B cell (primary cell): ENCODE measurements at regions of chr11 and their contacts with region 1.

Region 1: GRCh38 chr11:14519917-14520746 is at the start of gene PSMA1:
- DNase-seq: peak; percentile 94
- ATAC-seq: peak; percentile 93
- H3K4me3 ChIP-seq: peak within 1 kb of the TSS; percentile 69 to 93 (median 89)
- H3K4me3 Mint-ChIP-seq: peak within 1 kb of the TSS; percentile 98
- H3K27ac ChIP-seq: peak within 1 kb of the TSS; percentile 83 to 91
- H3K27ac Mint-ChIP-seq: peak within 1 kb of the TSS; percentile 97
- H3K4me1 ChIP-seq: peaks cover 13 to 18% of the 10 kb centered on the region in 2 donors
- H3K4me1 Mint-ChIP-seq: peaks cover 21% of the 10 kb centered on the region
- H3K27me3 ChIP-seq: no peaks in the 10 kb centered on the region
- H3K27me3 Mint-ChIP-seq: no peaks in the 10 kb centered on the region
- CTCF ChIP-seq: no peak
- total RNA-seq, gene PSMA1: 115 and 123 TPM in 2 replicates

Region 2: DNA sequence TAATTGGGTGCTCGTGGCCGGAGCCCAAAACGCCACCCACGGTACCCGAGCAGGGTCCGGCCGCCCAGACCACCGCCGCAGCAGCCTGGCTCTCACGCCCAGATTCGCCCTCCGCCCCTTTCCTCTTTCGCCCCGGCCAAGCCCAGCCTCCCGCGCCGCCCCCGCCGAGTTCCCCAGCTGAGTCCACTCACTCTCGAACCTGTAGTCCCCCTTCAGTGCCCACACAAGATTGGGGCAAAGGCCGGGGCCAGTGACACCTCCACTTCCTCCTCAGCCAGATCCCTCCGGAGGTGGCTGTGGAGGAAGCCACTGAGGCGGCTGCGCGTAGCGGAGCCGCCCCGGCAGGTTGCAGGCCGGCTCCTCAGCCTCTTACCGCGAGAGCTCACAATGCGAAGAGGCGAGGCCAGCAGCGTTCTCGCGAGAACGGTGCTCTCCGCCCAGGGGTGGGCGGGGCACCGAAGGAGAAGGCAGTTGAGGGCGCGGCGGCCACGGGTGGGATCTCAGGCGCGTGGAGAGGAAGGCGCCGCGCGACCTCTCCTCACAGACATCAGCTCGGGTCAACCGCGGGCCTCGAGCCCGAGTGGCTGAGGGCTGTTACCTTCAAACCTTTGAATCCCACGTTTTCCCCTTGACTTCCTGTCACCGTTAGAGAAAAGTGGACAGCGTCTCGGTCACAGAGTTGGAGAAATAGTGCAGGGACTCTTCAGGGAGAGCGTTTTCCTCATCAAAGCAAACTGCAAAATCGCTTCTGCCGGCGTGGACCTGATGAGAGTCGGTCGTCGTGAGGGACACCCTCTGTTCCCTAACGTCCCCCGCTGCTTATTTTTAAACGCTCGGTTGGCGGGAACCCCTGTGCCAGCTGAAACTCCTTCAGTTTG is 1057.0 kb before region 1 on chr11 and contains the start of gene BTBD10:
- CTCF ChIA-PET with region 1: no interaction called
- POLR2A ChIA-PET with region 1: no interaction called
- intact Hi-C with region 1: loop called (anchors 10 kb)
- DNase-seq: peak; percentile 97
- ATAC-seq: peak; percentile 98
- H3K4me3 ChIP-seq: peak within 1 kb of the TSS; percentile 87 to 94 (median 88)
- H3K4me3 Mint-ChIP-seq: peak within 1 kb of the TSS; percentile 99
- H3K27ac ChIP-seq: peak within 1 kb of the TSS; percentile 83 to 93
- H3K27ac Mint-ChIP-seq: peak within 1 kb of the TSS; percentile 97
- H3K4me1 ChIP-seq: peaks cover 17 to 18% of the 10 kb centered on the region in 2 donors
- H3K4me1 Mint-ChIP-seq: peaks cover 46% of the 10 kb centered on the region
- H3K27me3 ChIP-seq: no peaks in the 10 kb centered on the region
- H3K27me3 Mint-ChIP-seq: no peaks in the 10 kb centered on the region
- CTCF ChIP-seq: no peak
- total RNA-seq, gene BTBD10: 19.6 and 22.8 TPM in 2 replicates

Region 3: DNA sequence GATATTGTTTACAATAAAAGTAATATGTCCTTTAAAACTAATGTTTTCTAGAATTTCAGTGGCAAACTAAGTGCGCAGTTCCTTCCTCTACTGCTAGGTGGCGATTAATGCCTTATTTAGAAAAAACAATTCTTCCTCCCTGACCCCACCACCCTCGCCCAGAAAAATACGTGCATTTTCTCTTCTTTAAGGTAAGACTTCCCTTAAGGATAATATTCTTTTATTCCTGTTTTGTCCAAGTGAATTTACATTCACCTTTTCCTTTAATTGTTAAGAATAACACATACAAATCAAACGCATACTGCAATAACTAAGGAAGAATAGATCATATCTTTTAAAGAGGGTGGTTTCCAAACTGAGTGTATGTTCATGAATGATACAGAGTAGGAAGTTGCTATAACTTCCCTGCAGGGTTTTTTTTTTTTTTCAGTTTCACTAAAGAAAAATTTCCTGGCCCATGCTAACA is 17.0 kb after region 1 on chr11:
- CTCF ChIA-PET with region 1: interaction called, 4 read pairs
- POLR2A ChIA-PET with region 1: no interaction called
- intact Hi-C with region 1: loop called (anchors 2 kb)
- DNase-seq: peak; percentile 77
- ATAC-seq: peak; percentile 83
- H3K4me3 ChIP-seq: peak overlapping the region in 3 of 5 experiments; percentile 8 to 58 (median 12)
- H3K4me3 Mint-ChIP-seq: peak overlapping the region; percentile 82
- H3K27ac ChIP-seq: peak overlapping the region; percentile 22 to 69
- H3K27ac Mint-ChIP-seq: no peak overlapping the region
- H3K4me1 ChIP-seq: no peaks in the 10 kb centered on the region
- H3K4me1 Mint-ChIP-seq: peaks cover 7% of the 10 kb centered on the region
- H3K27me3 ChIP-seq: no peaks in the 10 kb centered on the region
- H3K27me3 Mint-ChIP-seq: peaks cover 4% of the 10 kb centered on the region
- CTCF ChIP-seq: peak; percentile 92

Region 4: GRCh38 chr11:14643697-14644225 is 123.6 kb after region 1 on chr11 and contains the start of gene PDE3B:
- CTCF ChIA-PET with region 1: interaction called, 15 read pairs
- POLR2A ChIA-PET with region 1: no interaction called
- intact Hi-C with region 1: no loop called
- DNase-seq: peak; percentile 72
- ATAC-seq: peak; percentile 74
- H3K4me3 ChIP-seq: peak within 1 kb of the TSS; percentile 58 to 92 (median 73)
- H3K4me3 Mint-ChIP-seq: peak within 1 kb of the TSS; percentile 92
- H3K27ac ChIP-seq: peak within 1 kb of the TSS in 1 of 2 donors; percentile 38
- H3K27ac Mint-ChIP-seq: peak within 1 kb of the TSS; percentile 64
- H3K4me1 ChIP-seq: peaks cover 7 to 17% of the 10 kb centered on the region in 2 donors
- H3K4me1 Mint-ChIP-seq: peaks cover 9% of the 10 kb centered on the region
- H3K27me3 ChIP-seq: peaks cover 0 to 29% (median 14%) of the 10 kb centered on the region in 4 experiments
- H3K27me3 Mint-ChIP-seq: peaks cover 40% of the 10 kb centered on the region
- CTCF ChIP-seq: peak; percentile 3
- total RNA-seq, gene PDE3B: 60.7 and 70.7 TPM in 2 replicates

Region 5: DNA sequence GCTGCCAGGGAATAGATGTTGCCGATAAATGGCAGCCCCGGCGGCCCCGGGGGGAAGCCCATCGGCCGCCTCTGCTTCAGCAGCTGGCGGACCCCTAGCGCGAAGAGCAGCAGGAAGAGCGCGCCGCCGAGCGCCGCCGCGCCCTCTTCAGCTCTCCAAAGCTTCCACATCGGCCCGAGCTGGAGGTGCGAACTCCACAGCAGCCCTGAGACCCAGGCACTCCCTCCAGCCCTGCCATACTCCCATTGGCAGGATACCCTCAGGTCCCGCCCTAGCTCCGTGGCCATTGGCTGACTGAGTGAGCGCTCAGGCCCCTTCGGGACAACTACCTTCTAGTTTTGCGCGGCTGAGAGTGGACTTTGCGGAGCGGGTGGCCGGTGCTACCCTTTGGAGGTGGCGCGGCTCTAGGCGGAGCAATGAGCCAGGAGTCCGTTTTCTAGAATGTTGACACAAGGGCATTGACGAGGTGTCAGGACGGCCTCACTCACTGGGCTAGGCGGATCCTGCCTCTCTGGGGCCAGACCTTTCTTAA is 372.0 kb after region 1 on chr11 and contains the start of gene CYP2R1:
- CTCF ChIA-PET with region 1: interaction called, 10 read pairs
- POLR2A ChIA-PET with region 1: interaction called, 12 read pairs
- intact Hi-C with region 1: loop called (anchors 1 kb)
- DNase-seq: peak; percentile 93
- ATAC-seq: peak; percentile 85
- H3K4me3 ChIP-seq: peak within 1 kb of the TSS; percentile 82 to 91 (median 87)
- H3K4me3 Mint-ChIP-seq: peak within 1 kb of the TSS; percentile 99
- H3K27ac ChIP-seq: peak within 1 kb of the TSS; percentile 78 to 83
- H3K27ac Mint-ChIP-seq: peak within 1 kb of the TSS; percentile 97
- H3K4me1 ChIP-seq: peaks cover 4 to 5% of the 10 kb centered on the region in 2 donors
- H3K4me1 Mint-ChIP-seq: peaks cover 30% of the 10 kb centered on the region
- H3K27me3 ChIP-seq: no peaks in the 10 kb centered on the region
- H3K27me3 Mint-ChIP-seq: no peaks in the 10 kb centered on the region
- CTCF ChIP-seq: no peak
- total RNA-seq, gene CYP2R1: 42.4 and 43.6 TPM in 2 replicates